ENCODE measurements at regions of chr17 and their contacts with region 1.

Region 1: DNA sequence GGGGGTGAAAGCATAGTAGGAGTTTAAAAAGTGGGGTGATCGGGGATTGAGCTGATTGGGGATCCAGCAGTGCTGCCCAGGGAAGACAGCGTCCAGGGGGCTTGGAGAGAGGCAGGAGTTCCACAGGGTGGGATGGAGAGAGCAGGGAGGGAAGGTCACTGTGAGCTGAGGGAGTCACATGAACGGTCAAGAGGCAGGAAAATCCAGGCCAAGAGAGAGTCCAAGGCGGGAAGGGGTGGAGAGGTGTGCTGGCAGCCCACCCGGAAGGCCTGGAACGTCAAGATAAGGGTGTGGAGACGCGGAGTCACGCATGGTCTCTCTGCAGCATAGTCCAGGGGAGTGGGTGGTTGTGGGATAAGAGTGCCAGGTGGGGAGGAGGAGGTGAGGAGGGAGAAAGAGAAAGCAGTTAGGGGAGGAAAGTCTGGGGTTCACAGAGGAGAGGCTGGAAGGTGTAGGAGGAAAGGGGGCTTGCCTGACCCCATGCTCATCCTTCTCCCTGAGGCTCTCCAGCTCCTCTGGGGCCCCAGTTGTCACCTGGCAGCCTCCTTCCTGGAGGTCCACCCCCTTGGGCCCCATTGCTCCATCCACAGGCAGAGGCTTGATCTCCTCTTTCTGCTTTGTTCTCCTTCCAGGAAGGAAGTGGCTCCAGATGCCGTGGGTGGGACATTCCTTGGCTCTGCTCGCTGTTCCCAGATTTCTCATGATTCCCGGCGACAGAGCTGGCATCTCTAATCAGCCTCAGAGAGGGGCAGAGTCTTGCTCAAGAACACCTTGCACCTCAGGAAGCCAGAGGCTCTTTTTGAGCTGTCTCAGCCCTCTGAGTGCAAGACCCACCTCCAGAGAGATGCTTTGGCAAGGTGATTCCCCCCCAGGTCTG is 28.7 kb downstream of the CCR7 start:
- DNase-seq: peak in 1 of 9 donors; percentile 7
- ATAC-seq: no peak
- H3K4me3 ChIP-seq: no peak overlapping the region
- H3K4me3 Mint-ChIP-seq: peak overlapping the region in 6 of 10 donors; percentile 8 to 43 (median 23)
- H3K27ac ChIP-seq: no peak overlapping the region
- H3K27ac Mint-ChIP-seq: peak overlapping the region; percentile 77 to 99 (median 96)
- H3K4me1 ChIP-seq: peaks cover 68 to 81% of the 10 kb centered on the region in 2 donors
- H3K4me1 Mint-ChIP-seq: peaks cover 64 to 100% (median 94%) of the 10 kb centered on the region in 7 donors
- H3K27me3 ChIP-seq: no peaks in the 10 kb centered on the region
- H3K27me3 Mint-ChIP-seq: peaks cover 0 to 3% (median 0%) of the 10 kb centered on the region in 5 donors

Region 2: GRCh38 chr17:40474419-40475002 is 62.0 kb before region 1 on chr17:
- CTCF ChIA-PET with region 1: interaction called, 73 read pairs
- POLR2A ChIA-PET with region 1: interaction called, 39 read pairs
- intact Hi-C with region 1: loop called (anchors 1 kb)
- DNase-seq: no peak
- ATAC-seq: no peak
- H3K4me3 ChIP-seq: no peak overlapping the region
- H3K4me3 Mint-ChIP-seq: no peak overlapping the region
- H3K27ac ChIP-seq: no peak overlapping the region
- H3K27ac Mint-ChIP-seq: peak overlapping the region in 2 of 9 donors; percentile 26 to 53
- H3K4me1 ChIP-seq: peaks cover 3 to 24% of the 10 kb centered on the region in 2 donors
- H3K4me1 Mint-ChIP-seq: peaks cover 5 to 50% (median 13%) of the 10 kb centered on the region in 7 donors
- H3K27me3 ChIP-seq: no peaks in the 10 kb centered on the region
- H3K27me3 Mint-ChIP-seq: peaks cover 0 to 4% (median 0%) of the 10 kb centered on the region in 5 donors

Region 3: GRCh38 chr17:40551879-40552768 is 15.6 kb after region 1 on chr17:
- CTCF ChIA-PET with region 1: interaction called, 34 read pairs
- POLR2A ChIA-PET with region 1: interaction called, 1,524 read pairs
- intact Hi-C with region 1: loop called in 1 of 2 experiments (anchors 1 kb)
- DNase-seq: peak in 2 of 9 donors; percentile 33 to 43
- ATAC-seq: peak; percentile 2
- H3K4me3 ChIP-seq: no peak overlapping the region
- H3K4me3 Mint-ChIP-seq: peak overlapping the region in 9 of 10 donors; percentile 4 to 100 (median 58)
- H3K27ac ChIP-seq: peak overlapping the region; percentile 79
- H3K27ac Mint-ChIP-seq: peak overlapping the region; percentile 76 to 100 (median 99)
- H3K4me1 ChIP-seq: peaks cover 52 to 93% of the 10 kb centered on the region in 2 donors
- H3K4me1 Mint-ChIP-seq: peaks cover 59 to 100% (median 98%) of the 10 kb centered on the region in 7 donors
- H3K27me3 ChIP-seq: no peaks in the 10 kb centered on the region
- H3K27me3 Mint-ChIP-seq: no peaks in the 10 kb centered on the region